Activated naive CD4-positive, alpha-beta T cell treated with anti-CD3 and anti-CD28 coated beads for 36 hours (primary cell): ENCODE measurements at regions of chr4 and their contacts with region 1.

Region 1: DNA sequence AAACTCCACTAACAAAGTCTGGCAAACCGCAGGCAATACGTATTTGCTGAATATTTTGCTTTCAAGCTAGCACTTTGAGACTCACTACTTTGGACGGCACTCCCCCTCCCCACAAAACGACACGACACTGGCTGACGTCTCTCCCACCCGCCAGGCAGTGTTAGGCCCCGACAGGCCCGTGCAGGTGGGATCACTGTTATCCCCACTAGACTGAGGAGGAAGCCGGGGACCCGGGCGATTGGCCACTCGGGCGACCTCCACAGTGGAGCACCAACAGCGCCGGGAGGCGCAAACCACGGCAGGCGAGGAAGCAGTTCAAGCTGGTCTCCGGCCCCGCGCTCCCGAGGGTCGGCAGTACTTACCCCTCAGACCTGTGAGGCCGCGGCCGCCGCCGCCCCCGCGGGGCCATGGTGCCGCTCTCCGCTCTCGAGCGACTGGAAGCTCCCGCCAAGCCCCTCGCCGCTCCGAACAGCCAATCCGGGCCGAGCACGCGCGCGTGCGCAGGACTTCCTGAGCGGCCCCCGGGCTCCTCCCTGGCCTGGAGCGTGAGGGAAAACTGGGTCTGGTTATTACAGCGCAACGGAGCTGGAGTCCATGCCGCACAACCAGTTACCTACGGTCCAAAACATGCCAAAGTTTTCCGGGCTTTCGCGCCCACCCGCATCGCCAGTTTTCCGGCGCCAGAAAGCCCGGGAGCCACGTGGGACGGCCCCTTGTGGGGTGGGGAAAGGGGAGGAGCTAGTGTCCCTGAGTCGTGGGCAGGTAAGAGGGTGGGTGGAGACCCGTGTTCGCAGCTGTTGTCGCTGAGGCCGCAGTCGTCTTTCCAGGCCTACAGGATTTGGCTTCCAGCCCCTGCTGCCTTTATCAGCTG is at the start of gene CENPU:
- DNase-seq: peak; percentile 97
- H3K4me3 Mint-ChIP-seq: peak within 1 kb of the TSS; percentile 97
- H3K27ac Mint-ChIP-seq: peak within 1 kb of the TSS; percentile 86
- H3K4me1 Mint-ChIP-seq: peaks cover 19% of the 10 kb centered on the region
- H3K27me3 Mint-ChIP-seq: no peaks in the 10 kb centered on the region
- total RNA-seq, gene CENPU: 78.7 to 91.5 TPM

Region 2: DNA sequence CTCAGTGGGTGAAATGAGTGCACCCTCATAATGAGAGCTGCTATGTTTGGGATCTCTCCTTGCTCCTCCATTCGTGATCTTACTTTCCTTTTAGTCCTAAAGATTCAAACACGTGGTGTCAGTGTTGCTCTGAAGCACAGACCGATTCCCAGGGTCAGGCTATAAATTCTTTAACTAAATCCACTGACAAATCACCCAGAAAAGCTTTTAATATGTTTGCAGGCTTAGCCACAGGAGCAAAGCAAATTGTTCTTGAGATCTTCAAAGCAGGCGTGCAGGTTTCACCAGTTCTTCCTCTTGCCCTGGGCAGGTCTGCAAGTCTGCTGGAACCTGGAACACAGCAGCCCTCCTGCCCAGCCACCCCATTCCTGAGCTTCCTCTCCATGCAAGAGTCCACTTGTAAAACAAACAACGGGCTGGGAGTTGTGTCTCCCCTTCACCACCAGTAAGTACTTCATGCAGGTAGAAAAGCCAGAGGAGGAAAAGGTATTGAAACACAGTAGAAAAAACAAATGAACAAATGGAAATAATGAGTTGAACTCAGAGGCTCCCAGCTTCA is 446.1 kb before region 1 on chr4:
- CTCF ChIA-PET with region 1: interaction called, 3 read pairs
- intact Hi-C with region 1: loop called (anchors 2 kb)
- DNase-seq: no peak
- H3K4me3 Mint-ChIP-seq: no peak overlapping the region
- H3K27ac Mint-ChIP-seq: no peak overlapping the region
- H3K4me1 Mint-ChIP-seq: peaks cover 52% of the 10 kb centered on the region
- H3K27me3 Mint-ChIP-seq: peaks cover 4% of the 10 kb centered on the region

Region 3: DNA sequence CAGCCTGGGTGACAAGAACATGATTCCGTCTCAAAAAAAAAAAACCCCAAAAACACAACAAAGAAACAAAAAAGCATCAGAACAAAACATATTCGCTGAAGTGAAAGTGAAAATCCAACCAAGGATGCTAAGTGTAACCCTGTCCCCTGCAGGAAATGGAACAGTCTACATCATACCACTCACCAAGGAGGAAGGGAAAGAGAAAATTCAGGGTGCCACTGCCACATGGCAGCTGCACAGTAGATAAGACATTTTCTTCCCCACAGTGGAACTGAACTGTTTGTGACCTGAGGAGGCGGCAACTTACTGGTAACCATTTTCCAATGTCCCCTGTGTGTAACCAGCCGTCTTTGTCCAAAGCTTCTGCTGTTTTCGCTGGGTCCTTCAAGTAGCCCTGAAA is 28.2 kb after region 1 on chr4:
- CTCF ChIA-PET with region 1: no interaction called
- intact Hi-C with region 1: loop called (anchors 1 kb)
- DNase-seq: peak; percentile 56
- H3K4me3 Mint-ChIP-seq: peak overlapping the region; percentile 24
- H3K27ac Mint-ChIP-seq: peak overlapping the region; percentile 83
- H3K4me1 Mint-ChIP-seq: peaks cover 22% of the 10 kb centered on the region
- H3K27me3 Mint-ChIP-seq: no peaks in the 10 kb centered on the region

Region 4: GRCh38 chr4:184983672-184984356 is 249.9 kb after region 1 on chr4:
- CTCF ChIA-PET with region 1: no interaction called
- intact Hi-C with region 1: loop called (anchors 1 kb)
- DNase-seq: peak; percentile 83
- H3K4me3 Mint-ChIP-seq: no peak overlapping the region
- H3K27ac Mint-ChIP-seq: no peak overlapping the region
- H3K4me1 Mint-ChIP-seq: no peaks in the 10 kb centered on the region
- H3K27me3 Mint-ChIP-seq: no peaks in the 10 kb centered on the region